ENCODE measurements at regions of chr15 and their contacts with region 1.

Region 1: GRCh38 chr15:60444289-60444912 is 34.5 kb downstream of the ICE2 start:
- DNase-seq: peak; percentile 35
- H3K4me3 ChIP-seq: no peak overlapping the region
- H3K27ac ChIP-seq: no peak overlapping the region
- H3K4me1 ChIP-seq: no peaks in the 10 kb centered on the region
- H3K27me3 ChIP-seq: no peaks in the 10 kb centered on the region
- CTCF ChIP-seq: peak; percentile 14 to 23
- POLR2A ChIP-seq: no peak

Region 2: GRCh38 chr15:60326824-60327654 is 117.4 kb before region 1 on chr15:
- CTCF ChIA-PET with region 1: interaction called, 21 read pairs
- POLR2A ChIA-PET with region 1: interaction called, 3 read pairs
- dilution Hi-C with region 1: no loop called
- intact Hi-C with region 1: loop called (anchors 1 kb)
- DNase-seq: peak; percentile 74
- H3K4me3 ChIP-seq: no peak overlapping the region
- H3K27ac ChIP-seq: no peak overlapping the region
- H3K4me1 ChIP-seq: no peaks in the 10 kb centered on the region
- H3K27me3 ChIP-seq: peaks cover 30 to 54% of the 10 kb centered on the region in 2 experiments
- CTCF ChIP-seq: peak; percentile 64 to 75
- POLR2A ChIP-seq: no peak

Region 3: GRCh38 chr15:60374628-60375081 is 69.7 kb before region 1 on chr15:
- CTCF ChIA-PET with region 1: interaction called, 13 read pairs
- POLR2A ChIA-PET with region 1: interaction called, 3 read pairs
- dilution Hi-C with region 1: no loop called
- intact Hi-C with region 1: no loop called
- DNase-seq: peak; percentile 98
- H3K4me3 ChIP-seq: no peak overlapping the region
- H3K27ac ChIP-seq: peak overlapping the region; percentile 98
- H3K4me1 ChIP-seq: peaks cover 85% of the 10 kb centered on the region
- H3K27me3 ChIP-seq: no peaks in the 10 kb centered on the region
- CTCF ChIP-seq: no peak
- POLR2A ChIP-seq: peak; percentile 72

Region 4: DNA sequence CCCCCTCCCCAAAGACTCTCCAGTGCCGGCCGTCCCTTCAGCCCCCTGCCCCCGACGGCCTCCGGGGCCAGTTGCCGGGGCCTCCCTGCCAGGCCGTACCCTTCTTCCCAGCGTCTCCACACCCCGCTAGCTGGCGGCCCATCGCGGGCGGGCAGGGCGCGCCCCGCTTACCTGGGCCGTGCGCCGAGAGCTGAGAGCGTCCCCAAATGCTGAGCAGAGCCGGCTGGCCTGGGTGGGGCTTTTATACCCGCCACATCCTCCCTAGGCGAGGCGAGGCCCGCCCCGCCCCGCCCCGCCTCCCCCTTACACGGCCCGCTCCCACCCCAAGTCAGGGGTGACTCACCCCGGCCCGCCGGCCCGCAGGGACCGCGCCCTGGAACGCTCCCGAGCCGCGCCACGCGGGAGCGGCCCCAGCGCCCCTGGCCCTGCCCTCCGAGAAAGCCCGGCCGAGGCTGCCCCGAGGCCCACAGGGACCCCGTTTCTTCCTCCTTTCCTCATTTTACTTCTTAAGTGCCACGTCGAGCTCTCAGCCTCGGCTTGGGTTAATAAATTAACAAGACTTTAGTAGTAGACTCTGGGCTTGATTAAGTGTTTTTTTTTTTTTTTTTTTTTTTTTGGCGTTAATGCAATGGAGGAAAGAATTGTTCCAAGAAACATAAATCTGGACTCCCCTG is 46.5 kb before region 1 on chr15 and contains the start of gene ANXA2:
- CTCF ChIA-PET with region 1: interaction called, 40 read pairs
- POLR2A ChIA-PET with region 1: interaction called, 5 read pairs
- dilution Hi-C with region 1: no loop called
- intact Hi-C with region 1: no loop called
- DNase-seq: peak; percentile 80
- H3K4me3 ChIP-seq: peak within 1 kb of the TSS; percentile 82 to 99 (median 96)
- H3K27ac ChIP-seq: peak within 1 kb of the TSS; percentile 97
- H3K4me1 ChIP-seq: peaks cover 61% of the 10 kb centered on the region
- H3K27me3 ChIP-seq: no peaks in the 10 kb centered on the region
- CTCF ChIP-seq: no peak
- POLR2A ChIP-seq: peak; percentile 96
- total RNA-seq, gene ANXA2: 2,636 and 2,725 TPM in 2 replicates

Region 5: GRCh38 chr15:60428935-60429334 is 15.5 kb before region 1 on chr15:
- CTCF ChIA-PET with region 1: interaction called, 14 read pairs
- POLR2A ChIA-PET with region 1: no interaction called
- dilution Hi-C with region 1: no loop called
- intact Hi-C with region 1: no loop called
- DNase-seq: no peak
- H3K4me3 ChIP-seq: no peak overlapping the region
- H3K27ac ChIP-seq: no peak overlapping the region
- H3K4me1 ChIP-seq: peaks cover 9% of the 10 kb centered on the region
- H3K27me3 ChIP-seq: no peaks in the 10 kb centered on the region
- CTCF ChIP-seq: no peak
- POLR2A ChIP-seq: no peak

Region 6: DNA sequence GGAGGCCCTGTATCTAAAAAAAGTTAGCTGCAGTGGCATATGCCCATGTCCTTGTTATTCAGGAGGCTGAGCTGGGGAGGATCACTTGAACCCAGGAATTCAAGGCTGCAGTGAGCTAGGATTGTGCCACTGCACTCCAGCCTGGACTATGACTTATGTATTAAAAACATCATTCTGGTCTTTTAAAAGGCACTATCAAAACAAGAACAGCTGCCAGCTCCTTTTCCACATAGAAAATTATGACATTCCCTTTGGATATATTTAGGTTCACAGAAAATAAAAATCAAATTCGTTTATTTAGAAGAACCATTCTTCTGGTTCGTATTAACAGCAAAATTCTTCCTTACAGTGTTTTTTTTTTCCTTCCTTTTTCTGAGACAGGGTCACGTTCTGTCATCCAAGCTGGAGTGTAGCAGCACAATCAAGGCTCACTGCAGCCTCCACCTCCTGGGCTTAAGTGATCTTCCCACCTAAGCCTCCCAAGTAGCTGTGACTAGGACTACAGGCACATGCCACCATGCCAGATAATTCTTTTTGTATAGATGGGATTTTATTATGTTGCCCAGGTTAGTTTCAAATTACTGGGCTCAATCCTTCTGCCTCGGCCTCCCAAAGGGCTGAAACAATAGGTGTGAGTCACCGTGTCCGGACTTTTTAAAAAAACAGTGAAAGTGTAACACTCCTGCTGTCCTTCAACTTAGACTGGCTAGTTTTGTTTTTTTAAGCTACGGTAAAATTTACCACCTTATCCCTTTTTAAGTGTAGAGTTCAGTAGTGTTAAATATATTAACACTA is 20.6 kb after region 1 on chr15:
- CTCF ChIA-PET with region 1: interaction called, 11 read pairs
- POLR2A ChIA-PET with region 1: no interaction called
- dilution Hi-C with region 1: no loop called
- intact Hi-C with region 1: no loop called
- DNase-seq: peak; percentile 95
- H3K4me3 ChIP-seq: no peak overlapping the region
- H3K27ac ChIP-seq: peak overlapping the region; percentile 61
- H3K4me1 ChIP-seq: peaks cover 17% of the 10 kb centered on the region
- H3K27me3 ChIP-seq: no peaks in the 10 kb centered on the region
- CTCF ChIP-seq: no peak
- POLR2A ChIP-seq: no peak